ENCODE measurements at regions of chr11 and their contacts with region 1.

Region 1: DNA sequence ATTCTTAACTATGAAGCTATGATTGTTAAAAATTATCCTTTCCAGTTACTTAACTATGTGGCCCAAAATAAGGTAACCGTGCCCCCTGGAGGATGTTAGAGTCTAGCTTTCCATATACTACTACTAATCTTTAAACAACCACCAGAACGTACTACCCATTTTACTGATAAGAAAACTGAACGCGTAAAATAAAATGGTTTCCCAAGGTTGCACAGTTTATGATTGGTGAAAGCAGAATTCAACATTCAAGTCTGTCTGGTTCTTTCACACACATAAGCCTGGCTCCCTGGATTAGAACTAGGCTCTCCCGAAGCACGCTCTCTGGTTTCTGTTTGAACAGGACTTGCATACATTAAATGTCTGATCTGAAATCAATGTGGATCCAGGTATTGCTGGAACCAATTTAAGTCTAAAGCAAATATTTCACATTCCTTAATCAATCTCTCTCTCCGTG is 437.9 kb upstream of the CCDC90B start:
- DNase-seq: peak; percentile 81
- H3K4me3 ChIP-seq: peak overlapping the region; percentile 73
- H3K27ac ChIP-seq: no peak overlapping the region
- H3K4me1 ChIP-seq: peaks cover 9% of the 10 kb centered on the region; the same call in 1 of the 2 replicates
- H3K27me3 ChIP-seq: no peaks in the 10 kb centered on the region; the same call in 1 of the 2 replicates

Region 2: GRCh38 chr11:83285771-83286528 is 438.1 kb before region 1 on chr11 and contains the start of gene CCDC90B:
- in situ Hi-C with region 1: loop called (anchors 10 kb)
- DNase-seq: peak; percentile 99
- H3K4me3 ChIP-seq: peak within 1 kb of the TSS; percentile 83
- H3K27ac ChIP-seq: peak within 1 kb of the TSS; percentile 91
- H3K4me1 ChIP-seq: peaks cover 27% of the 10 kb centered on the region
- H3K27me3 ChIP-seq: no peaks in the 10 kb centered on the region
- total RNA-seq, gene CCDC90B: 49.9 and 53.1 TPM in 2 replicates

Region 3: DNA sequence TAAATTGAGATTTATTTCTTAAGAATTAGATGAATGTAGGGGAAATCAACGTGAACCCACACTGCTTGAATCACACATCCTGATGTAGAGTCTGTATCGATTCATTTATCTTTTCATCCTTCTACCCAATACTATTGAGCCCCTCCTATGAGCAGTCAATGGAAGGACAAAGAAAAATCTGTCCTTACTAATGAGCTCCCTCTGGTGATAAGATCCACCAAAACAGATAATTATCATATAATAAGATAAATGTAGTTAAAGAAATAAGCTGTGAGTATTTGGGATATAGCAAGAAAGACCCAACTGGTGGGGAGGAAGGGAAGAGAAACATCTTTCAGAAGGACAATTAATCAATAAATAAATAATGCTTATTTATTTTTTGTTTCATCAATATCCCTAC is 52.7 kb before region 1 on chr11:
- in situ Hi-C with region 1: no loop called
- DNase-seq: peak; percentile 24
- H3K4me3 ChIP-seq: no peak overlapping the region
- H3K27ac ChIP-seq: no peak overlapping the region
- H3K4me1 ChIP-seq: peaks cover 5% of the 10 kb centered on the region; the same call in 1 of the 2 replicates
- H3K27me3 ChIP-seq: no peaks in the 10 kb centered on the region

Region 4: DNA sequence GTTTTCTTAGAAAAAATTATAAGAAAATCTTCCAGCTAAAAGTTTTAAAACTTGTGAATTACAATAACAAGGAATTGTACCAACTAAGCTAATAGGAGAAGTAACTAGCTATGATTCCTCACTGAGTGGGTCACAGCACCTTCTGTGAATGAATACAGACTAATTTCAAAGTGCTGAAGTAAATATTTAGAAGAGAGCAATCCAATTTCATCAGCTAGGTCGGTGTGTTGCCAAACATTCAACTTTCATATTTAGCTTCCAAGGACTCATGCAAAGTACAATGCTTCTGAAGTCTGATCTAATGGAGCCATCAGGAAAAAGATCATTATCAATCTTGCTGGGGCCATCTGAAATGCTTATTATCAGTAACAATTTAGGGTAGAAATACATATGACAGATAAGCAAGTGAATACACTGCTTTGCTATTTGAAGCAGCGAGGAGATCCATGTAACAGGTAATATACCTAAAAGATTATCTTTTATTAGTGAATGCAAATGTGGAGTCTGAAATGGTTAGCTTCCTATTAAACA is 312.7 kb after region 1 on chr11:
- in situ Hi-C with region 1: no loop called
- DNase-seq: no peak
- H3K4me3 ChIP-seq: no peak overlapping the region
- H3K27ac ChIP-seq: no peak overlapping the region
- H3K4me1 ChIP-seq: no peaks in the 10 kb centered on the region
- H3K27me3 ChIP-seq: no peaks in the 10 kb centered on the region

Measured in GM23248 (cell line).